ENCODE measurements at regions of chr6 and their contacts with region 1.

Region 1: GRCh38 chr6:127918506-127919427 is 17.9 kb upstream of the THEMIS start:
- DNase-seq: peak in 7 of 10 donors; percentile 22 to 84 (median 64)
- ATAC-seq: peak; percentile 79 to 83
- H3K4me3 Mint-ChIP-seq: peak overlapping the region; percentile 85 to 99 (median 94)
- H3K27ac Mint-ChIP-seq: peak overlapping the region; percentile 71 to 98 (median 97)
- H3K4me1 Mint-ChIP-seq: peaks cover 33 to 87% (median 75%) of the 10 kb centered on the region in 4 donors
- H3K27me3 Mint-ChIP-seq: no peaks in the 10 kb centered on the region

Region 2: GRCh38 chr6:127877231-127877630 is 41.5 kb before region 1 on chr6:
- POLR2A ChIA-PET with region 1: no interaction called
- DNase-seq: no peak
- ATAC-seq: no peak
- H3K4me3 Mint-ChIP-seq: peak overlapping the region; percentile 43 to 80 (median 70)
- H3K27ac Mint-ChIP-seq: peak overlapping the region; percentile 57 to 93 (median 84)
- H3K4me1 Mint-ChIP-seq: peaks cover 18 to 65% (median 56%) of the 10 kb centered on the region in 4 donors
- H3K27me3 Mint-ChIP-seq: no peaks in the 10 kb centered on the region

Region 3: DNA sequence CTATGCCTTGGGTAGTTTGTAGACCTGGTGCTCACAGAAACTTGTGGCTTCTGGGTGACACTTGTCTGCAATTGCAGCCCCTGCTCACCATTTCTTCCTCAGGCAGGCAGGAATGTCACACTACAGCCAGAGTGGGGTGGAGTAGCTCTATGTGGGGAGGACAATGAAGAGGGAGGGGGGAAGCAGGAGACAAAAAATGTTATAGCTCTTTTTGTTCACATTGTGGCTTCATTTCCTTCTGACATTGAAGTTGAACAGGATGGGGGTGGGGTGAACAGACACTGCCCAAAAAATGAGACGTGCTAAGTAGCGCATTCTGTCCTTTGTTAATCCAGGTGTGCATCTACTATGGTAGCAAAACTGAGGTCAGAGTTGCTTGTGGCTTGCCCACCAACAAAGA is 17.8 kb before region 1 on chr6 and contains the start of gene THEMIS:
- POLR2A ChIA-PET with region 1: interaction called, 27 read pairs
- DNase-seq: peak in 9 of 10 donors; percentile 32 to 82 (median 72)
- ATAC-seq: peak; percentile 78 to 87
- H3K4me3 Mint-ChIP-seq: peak within 1 kb of the TSS; percentile 96 to 100 (median 98)
- H3K27ac Mint-ChIP-seq: peak within 1 kb of the TSS; percentile 93 to 99 (median 95)
- H3K4me1 Mint-ChIP-seq: peaks cover 27 to 65% (median 44%) of the 10 kb centered on the region in 4 donors
- H3K27me3 Mint-ChIP-seq: no peaks in the 10 kb centered on the region
- polyA plus RNA-seq, gene THEMIS: 168 to 212 (median 183) TPM

Region 4: GRCh38 chr6:127980996-127981395 is 62.2 kb after region 1 on chr6:
- POLR2A ChIA-PET with region 1: interaction called, 13 read pairs
- DNase-seq: no peak
- ATAC-seq: peak; percentile 3 to 7
- H3K4me3 Mint-ChIP-seq: peak overlapping the region; percentile 17 to 92 (median 74)
- H3K27ac Mint-ChIP-seq: peak overlapping the region in 9 of 10 donors; percentile 15 to 97 (median 85)
- H3K4me1 Mint-ChIP-seq: peaks cover 31 to 69% (median 62%) of the 10 kb centered on the region in 4 donors
- H3K27me3 Mint-ChIP-seq: no peaks in the 10 kb centered on the region

Measured in naive thymus-derived CD8-positive, alpha-beta T cell (primary cell).